Activated CD4-positive, alpha-beta T cell treated with anti-CD3 and anti-CD28 coated beads for 36 hours (primary cell): ENCODE measurements at regions of chr15 and their contacts with region 1.

Region 1: DNA sequence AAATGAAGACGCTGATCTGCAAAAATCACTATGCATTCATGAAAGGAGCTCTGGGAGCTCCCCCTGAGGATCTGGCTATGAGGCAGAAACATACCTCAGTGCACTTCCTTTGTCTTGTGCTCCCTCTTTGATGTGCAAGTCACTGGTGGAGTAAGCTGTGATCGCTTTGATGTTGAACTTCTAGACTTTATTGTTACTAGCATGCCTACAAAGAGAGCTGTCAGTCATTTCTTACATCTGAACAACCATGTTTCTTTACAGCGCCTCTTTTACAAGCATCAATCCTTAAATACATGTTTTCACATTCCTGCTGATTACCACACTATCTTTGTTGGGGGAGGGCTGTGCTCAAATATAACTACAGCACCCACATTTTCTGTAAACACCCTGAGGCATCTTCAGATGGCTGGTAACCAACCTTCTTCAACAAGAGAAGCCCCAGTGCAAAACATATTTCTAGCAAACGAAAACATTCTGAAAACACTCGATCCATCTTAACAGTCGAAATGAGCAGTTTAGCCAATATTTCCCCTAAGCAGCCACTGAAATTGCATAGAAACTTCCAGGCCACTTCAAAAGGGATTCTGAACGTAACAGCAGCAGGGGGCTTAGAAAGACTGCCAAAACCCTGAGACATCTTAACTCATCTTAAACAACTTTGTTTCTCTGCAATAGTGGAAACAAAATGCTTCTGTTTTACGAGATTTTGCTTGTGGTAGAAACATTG is 101.9 kb upstream of the ICE2 start:
- DNase-seq: peak; percentile 64
- ATAC-seq: peak; percentile 80
- H3K4me3 Mint-ChIP-seq: peak overlapping the region; percentile 54
- H3K27ac Mint-ChIP-seq: peak overlapping the region; percentile 87
- H3K4me1 Mint-ChIP-seq: peaks cover 90% of the 10 kb centered on the region
- H3K27me3 Mint-ChIP-seq: no peaks in the 10 kb centered on the region

Region 2: GRCh38 chr15:60635507-60636352 is 54.9 kb after region 1 on chr15:
- CTCF ChIA-PET with region 1: no interaction called
- POLR2A ChIA-PET with region 1: no interaction called
- intact Hi-C with region 1: no loop called
- DNase-seq: no peak
- ATAC-seq: no peak
- H3K4me3 Mint-ChIP-seq: no peak overlapping the region
- H3K27ac Mint-ChIP-seq: no peak overlapping the region
- H3K4me1 Mint-ChIP-seq: peaks cover 7% of the 10 kb centered on the region
- H3K27me3 Mint-ChIP-seq: no peaks in the 10 kb centered on the region

Region 3: GRCh38 chr15:60840306-60840702 is 259.5 kb after region 1 on chr15:
- CTCF ChIA-PET with region 1: interaction called, 9 read pairs
- POLR2A ChIA-PET with region 1: no interaction called
- intact Hi-C with region 1: loop called (anchors 2 kb)
- DNase-seq: peak; percentile 34
- ATAC-seq: peak; percentile 5
- H3K4me3 Mint-ChIP-seq: peak overlapping the region; percentile 60
- H3K27ac Mint-ChIP-seq: peak overlapping the region; percentile 62
- H3K4me1 Mint-ChIP-seq: peaks cover 77% of the 10 kb centered on the region
- H3K27me3 Mint-ChIP-seq: peaks cover 2% of the 10 kb centered on the region